ENCODE measurements at regions of chr5 and their contacts with region 1.

Region 1: GRCh38 chr5:64612344-64612961 is 77.8 kb upstream of the SHISAL2B start:
- DNase-seq: no peak
- ATAC-seq: peak; percentile 72
- H3K4me3 ChIP-seq: no peak overlapping the region
- H3K27ac ChIP-seq: no peak overlapping the region
- H3K4me1 ChIP-seq: no peaks in the 10 kb centered on the region
- H3K27me3 ChIP-seq: no peaks in the 10 kb centered on the region
- CTCF ChIP-seq: peak; percentile 65 to 80 (median 67)
- EP300 ChIP-seq: no peak
- POLR2A ChIP-seq: no peak
- RAD21 ChIP-seq: peak; percentile 90

Region 2: DNA sequence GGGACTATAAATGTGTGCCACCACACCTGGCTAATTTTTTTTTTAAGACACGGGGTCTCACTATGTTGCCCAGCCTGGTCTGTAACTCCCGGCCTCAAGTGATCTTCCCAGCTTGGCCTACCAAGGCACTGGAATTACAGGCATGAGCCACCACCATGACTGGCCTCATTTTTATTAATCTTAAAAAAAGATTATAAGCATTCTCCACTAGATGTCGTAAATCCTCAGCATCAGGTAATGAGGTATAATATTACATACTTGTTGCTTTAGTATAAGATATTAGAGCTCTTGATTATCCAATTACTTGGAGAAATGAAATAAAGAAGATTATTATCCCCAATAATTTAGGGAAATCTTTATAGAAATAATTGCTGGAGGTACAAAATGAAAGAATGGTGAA is 572.0 kb before region 1 on chr5:
- CTCF ChIA-PET with region 1: interaction called, 11 read pairs
- POLR2A ChIA-PET with region 1: no interaction called
- RAD21 ChIA-PET with region 1: no interaction called
- SMC1A ChIA-PET with region 1: no interaction called
- in situ Hi-C with region 1: no loop called
- intact Hi-C with region 1: no loop called
- DNase-seq: no peak
- ATAC-seq: no peak
- H3K4me3 ChIP-seq: no peak overlapping the region
- H3K27ac ChIP-seq: no peak overlapping the region
- H3K4me1 ChIP-seq: no peaks in the 10 kb centered on the region
- H3K27me3 ChIP-seq: no peaks in the 10 kb centered on the region
- CTCF ChIP-seq: no peak
- EP300 ChIP-seq: no peak
- POLR2A ChIP-seq: no peak
- RAD21 ChIP-seq: no peak

Region 3: GRCh38 chr5:64207978-64208377 is 404.5 kb before region 1 on chr5:
- CTCF ChIA-PET with region 1: interaction called, 31 read pairs
- POLR2A ChIA-PET with region 1: no interaction called
- RAD21 ChIA-PET with region 1: interaction called, 5 read pairs
- SMC1A ChIA-PET with region 1: interaction called, 5 read pairs
- in situ Hi-C with region 1: no loop called
- intact Hi-C with region 1: no loop called
- DNase-seq: no peak
- ATAC-seq: no peak
- H3K4me3 ChIP-seq: no peak overlapping the region
- H3K27ac ChIP-seq: no peak overlapping the region
- H3K4me1 ChIP-seq: no peaks in the 10 kb centered on the region
- H3K27me3 ChIP-seq: no peaks in the 10 kb centered on the region
- CTCF ChIP-seq: no peak; a peak in 1 of 6 replicates
- EP300 ChIP-seq: no peak
- POLR2A ChIP-seq: no peak
- RAD21 ChIP-seq: no peak

Region 4: DNA sequence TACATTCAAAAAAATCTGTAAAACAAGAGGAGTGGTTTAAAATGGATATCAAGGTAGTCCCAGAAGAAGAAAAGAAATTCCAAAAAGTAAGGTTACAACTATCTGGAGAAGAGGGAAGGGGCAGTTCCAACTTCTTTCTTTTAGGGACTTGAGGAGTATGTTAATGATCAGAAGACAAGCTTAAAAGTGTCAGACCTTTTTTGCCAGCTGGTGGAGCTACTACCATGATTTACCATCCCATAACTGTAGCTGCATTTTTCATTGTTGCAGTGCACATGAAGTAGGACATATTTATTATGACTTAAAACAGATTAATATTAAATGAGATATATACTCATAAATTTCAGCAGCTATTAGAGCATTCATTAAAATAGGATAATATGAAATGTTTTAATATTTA is 265.1 kb before region 1 on chr5:
- CTCF ChIA-PET with region 1: interaction called, 19 read pairs
- POLR2A ChIA-PET with region 1: interaction called, 8 read pairs
- RAD21 ChIA-PET with region 1: interaction called, 11 read pairs
- SMC1A ChIA-PET with region 1: interaction called, 7 read pairs
- in situ Hi-C with region 1: no loop called
- intact Hi-C with region 1: no loop called
- DNase-seq: no peak
- ATAC-seq: no peak
- H3K4me3 ChIP-seq: no peak overlapping the region
- H3K27ac ChIP-seq: no peak overlapping the region
- H3K4me1 ChIP-seq: no peaks in the 10 kb centered on the region
- H3K27me3 ChIP-seq: no peaks in the 10 kb centered on the region
- CTCF ChIP-seq: no peak
- EP300 ChIP-seq: no peak
- POLR2A ChIP-seq: no peak
- RAD21 ChIP-seq: no peak

Region 5: GRCh38 chr5:64595031-64595855 is 17.2 kb before region 1 on chr5:
- CTCF ChIA-PET with region 1: interaction called, 61 read pairs
- POLR2A ChIA-PET with region 1: no interaction called
- RAD21 ChIA-PET with region 1: interaction called, 20 read pairs
- SMC1A ChIA-PET with region 1: interaction called, 11 read pairs
- in situ Hi-C with region 1: no loop called
- intact Hi-C with region 1: no loop called
- DNase-seq: no peak
- ATAC-seq: peak; percentile 81
- H3K4me3 ChIP-seq: no peak overlapping the region
- H3K27ac ChIP-seq: no peak overlapping the region
- H3K4me1 ChIP-seq: no peaks in the 10 kb centered on the region
- H3K27me3 ChIP-seq: no peaks in the 10 kb centered on the region
- CTCF ChIP-seq: peak in 2 of 3 experiments; percentile 10 to 28; a peak in 1 of 6 replicates
- EP300 ChIP-seq: no peak
- POLR2A ChIP-seq: no peak
- RAD21 ChIP-seq: peak; percentile 32

Region 6: GRCh38 chr5:64784451-64785025 is 172.1 kb after region 1 on chr5:
- CTCF ChIA-PET with region 1: interaction called, 10 read pairs
- POLR2A ChIA-PET with region 1: no interaction called
- RAD21 ChIA-PET with region 1: interaction called, 3 read pairs
- SMC1A ChIA-PET with region 1: interaction called, 9 read pairs
- in situ Hi-C with region 1: no loop called
- intact Hi-C with region 1: no loop called
- DNase-seq: peak; percentile 26
- ATAC-seq: peak; percentile 92
- H3K4me3 ChIP-seq: no peak overlapping the region
- H3K27ac ChIP-seq: no peak overlapping the region
- H3K4me1 ChIP-seq: no peaks in the 10 kb centered on the region
- H3K27me3 ChIP-seq: no peaks in the 10 kb centered on the region
- CTCF ChIP-seq: peak; percentile 64 to 85 (median 70)
- EP300 ChIP-seq: no peak
- POLR2A ChIP-seq: no peak
- RAD21 ChIP-seq: peak; percentile 96